Activated CD4-positive, alpha-beta memory T cell treated with anti-CD3 and anti-CD28 coated beads for 36 hours (primary cell): ENCODE measurements at regions of chr3 and their contacts with region 1.

Region 1: DNA sequence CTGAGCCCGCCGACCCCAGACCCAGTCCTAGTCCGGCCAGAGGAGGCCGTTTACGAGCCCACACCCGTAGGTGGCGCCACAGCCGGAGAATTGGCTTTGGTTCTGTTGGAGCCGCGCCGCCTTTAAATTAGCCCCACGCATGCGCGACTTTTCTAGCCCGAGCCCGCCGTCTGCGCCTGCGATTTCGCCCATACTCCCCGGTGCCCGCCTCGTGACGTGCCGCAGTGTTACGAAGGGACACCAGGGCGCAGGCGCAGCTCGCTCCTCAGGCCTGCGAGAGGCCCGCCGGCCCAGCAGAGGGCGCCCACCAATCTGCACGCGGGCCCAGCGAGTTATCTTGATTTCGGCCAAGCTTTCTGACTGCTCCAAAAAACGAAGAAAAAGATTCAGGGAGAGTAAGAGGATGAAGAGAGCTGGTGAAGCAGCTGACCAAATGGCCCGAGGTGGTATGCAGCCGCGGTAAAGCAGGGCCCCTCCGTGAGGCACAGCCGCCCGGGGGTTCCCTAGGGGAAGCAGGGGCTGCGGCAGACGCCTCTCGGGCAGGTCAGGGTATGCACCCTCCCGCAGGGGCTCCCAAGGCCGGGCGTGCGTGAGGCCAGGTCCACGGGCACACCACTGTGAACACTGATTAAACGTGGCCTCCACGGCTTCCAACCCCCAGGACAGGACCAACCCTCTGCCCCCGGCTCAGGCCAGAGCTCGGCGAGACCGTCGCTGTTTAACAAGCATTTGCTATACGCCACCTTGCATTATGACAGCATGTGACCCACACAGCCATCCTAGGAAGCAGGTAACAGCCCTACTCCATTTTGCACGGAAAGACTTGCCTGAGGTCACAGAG is 32.8 kb downstream of the RPN1 start:
- DNase-seq: peak; percentile 99
- H3K4me3 Mint-ChIP-seq: peak overlapping the region; percentile 88
- H3K27ac Mint-ChIP-seq: peak overlapping the region; percentile 92
- H3K4me1 Mint-ChIP-seq: peaks cover 36% of the 10 kb centered on the region
- H3K27me3 Mint-ChIP-seq: no peaks in the 10 kb centered on the region

Region 2: GRCh38 chr3:128607710-128608048 is 10.1 kb before region 1 on chr3:
- CTCF ChIA-PET with region 1: interaction called, 44 read pairs
- POLR2A ChIA-PET with region 1: interaction called, 4 read pairs
- intact Hi-C with region 1: no loop called
- DNase-seq: no peak
- H3K4me3 Mint-ChIP-seq: no peak overlapping the region
- H3K27ac Mint-ChIP-seq: no peak overlapping the region
- H3K4me1 Mint-ChIP-seq: peaks cover 2% of the 10 kb centered on the region
- H3K27me3 Mint-ChIP-seq: no peaks in the 10 kb centered on the region

Region 3: DNA sequence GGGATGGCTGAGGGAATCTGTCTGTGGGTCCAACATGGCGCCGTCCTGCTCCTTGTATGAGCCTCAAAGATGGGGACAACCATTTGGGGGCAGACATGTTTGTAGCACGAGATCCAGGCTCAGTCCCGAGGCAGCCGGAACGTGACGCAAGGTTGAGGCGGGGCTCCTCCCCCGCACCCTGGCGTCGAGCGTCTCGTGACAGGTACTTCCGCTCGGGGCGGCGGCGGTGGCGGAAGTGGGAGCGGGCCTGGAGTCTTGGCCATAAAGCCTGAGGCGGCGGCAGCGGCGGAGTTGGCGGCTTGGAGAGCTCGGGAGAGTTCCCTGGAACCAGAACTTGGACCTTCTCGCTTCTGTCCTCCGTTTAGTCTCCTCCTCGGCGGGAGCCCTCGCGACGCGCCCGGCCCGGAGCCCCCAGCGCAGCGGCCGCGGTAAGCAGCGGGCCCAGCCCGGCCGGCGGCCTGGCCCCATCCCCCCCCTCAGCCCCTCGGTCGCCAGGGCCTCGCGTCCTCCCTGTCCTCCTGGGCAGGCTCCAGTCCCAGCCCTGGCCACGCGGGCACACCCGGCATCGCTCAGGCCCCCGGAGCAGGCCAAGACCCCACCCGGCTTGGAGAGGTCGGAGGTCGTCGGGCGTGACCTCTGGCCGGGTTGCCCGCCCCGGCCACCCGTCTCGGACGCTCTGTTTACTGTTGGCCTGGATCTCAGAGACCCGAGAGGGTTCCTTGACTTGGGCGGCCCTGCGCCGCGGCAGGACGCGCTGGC is 108.3 kb after region 1 on chr3 and contains the start of gene RAB7A:
- CTCF ChIA-PET with region 1: interaction called, 3 read pairs
- POLR2A ChIA-PET with region 1: no interaction called
- intact Hi-C with region 1: loop called (anchors 2 kb)
- DNase-seq: peak; percentile 99
- H3K4me3 Mint-ChIP-seq: peak within 1 kb of the TSS; percentile 93
- H3K27ac Mint-ChIP-seq: peak within 1 kb of the TSS; percentile 87
- H3K4me1 Mint-ChIP-seq: peaks cover 50% of the 10 kb centered on the region
- H3K27me3 Mint-ChIP-seq: no peaks in the 10 kb centered on the region
- total RNA-seq, gene RAB7A: 264 to 272 TPM

Region 4: GRCh38 chr3:128804017-128804810 is 186.4 kb after region 1 on chr3:
- CTCF ChIA-PET with region 1: interaction called, 9 read pairs
- POLR2A ChIA-PET with region 1: interaction called, 3 read pairs
- intact Hi-C with region 1: loop called (anchors 1 kb)
- DNase-seq: peak; percentile 76
- H3K4me3 Mint-ChIP-seq: peak overlapping the region; percentile 49
- H3K27ac Mint-ChIP-seq: peak overlapping the region; percentile 94
- H3K4me1 Mint-ChIP-seq: peaks cover 78% of the 10 kb centered on the region
- H3K27me3 Mint-ChIP-seq: no peaks in the 10 kb centered on the region

Region 5: GRCh38 chr3:128863560-128863959 is 245.8 kb after region 1 on chr3:
- CTCF ChIA-PET with region 1: no interaction called
- POLR2A ChIA-PET with region 1: no interaction called
- intact Hi-C with region 1: no loop called
- DNase-seq: peak; percentile 40
- H3K4me3 Mint-ChIP-seq: no peak overlapping the region
- H3K27ac Mint-ChIP-seq: no peak overlapping the region
- H3K4me1 Mint-ChIP-seq: no peaks in the 10 kb centered on the region
- H3K27me3 Mint-ChIP-seq: no peaks in the 10 kb centered on the region

Region 6: GRCh38 chr3:128879125-128879969 is 261.6 kb after region 1 on chr3 and contains the start of gene ACAD9:
- CTCF ChIA-PET with region 1: interaction called, 27 read pairs
- POLR2A ChIA-PET with region 1: interaction called, 7 read pairs
- intact Hi-C with region 1: loop called (anchors 1 kb)
- DNase-seq: peak; percentile 98
- H3K4me3 Mint-ChIP-seq: peak within 1 kb of the TSS; percentile 93
- H3K27ac Mint-ChIP-seq: peak within 1 kb of the TSS; percentile 95
- H3K4me1 Mint-ChIP-seq: peaks cover 61% of the 10 kb centered on the region
- H3K27me3 Mint-ChIP-seq: no peaks in the 10 kb centered on the region
- total RNA-seq, gene ACAD9: 45.3 to 45.5 TPM